Dendritic cell treated with granulocyte-macrophage colony-stimulating factor and Interleukin-4, amounts not matched to agents 40 ng/mL and 50 ng/mL, for 4 days (primary cell): ENCODE measurements at regions of chr18 and their contacts with region 1.

Region 1: GRCh38 chr18:27461957-27462356 is 276.8 kb upstream of the CHST9 start:
- H3K4me3 Mint-ChIP-seq: no peak overlapping the region
- H3K27ac Mint-ChIP-seq: no peak overlapping the region
- H3K4me1 Mint-ChIP-seq: no peaks in the 10 kb centered on the region
- H3K27me3 Mint-ChIP-seq: no peaks in the 10 kb centered on the region

Region 2: DNA sequence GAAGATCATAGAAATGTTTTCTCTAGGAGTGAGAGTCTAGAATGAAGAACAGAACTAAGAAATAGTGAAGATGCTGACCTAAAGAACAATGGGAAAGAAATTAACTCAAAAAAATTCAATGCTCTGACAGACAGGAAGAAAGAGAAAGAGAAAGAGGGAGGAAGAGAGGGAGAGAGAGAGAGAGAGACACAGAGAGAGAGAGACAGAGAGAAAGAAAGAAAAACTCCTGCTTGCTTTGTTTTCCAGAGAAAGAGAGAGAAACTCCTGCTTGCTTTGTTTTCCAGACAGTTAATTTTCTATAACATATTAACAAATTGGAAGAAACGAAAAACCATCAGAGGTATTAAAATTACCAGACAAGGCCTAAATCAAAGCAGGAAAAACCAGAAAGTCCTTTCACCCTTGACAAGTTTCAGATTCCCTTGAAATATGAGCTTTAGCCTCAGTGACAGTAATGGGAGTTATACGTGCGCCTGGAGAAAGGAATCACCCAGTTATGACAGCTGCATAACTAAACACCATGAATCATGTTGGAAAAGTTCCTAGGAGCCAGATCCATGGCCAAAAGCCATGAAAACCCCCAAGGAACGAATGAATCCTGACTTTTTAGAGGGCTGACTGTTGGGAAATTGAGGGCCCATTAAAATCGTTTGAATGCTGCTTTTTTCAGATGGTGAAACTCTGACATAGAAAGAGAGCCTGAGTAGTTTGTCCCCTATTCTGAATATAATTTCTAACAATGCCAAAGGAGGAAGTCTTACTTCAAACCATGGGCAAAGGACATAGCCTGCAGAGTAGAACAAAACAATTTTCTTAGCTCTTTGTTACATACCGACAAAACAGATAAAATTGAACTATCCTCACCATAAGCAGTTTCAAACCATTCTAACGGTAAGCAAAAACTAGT is 48.2 kb before region 1 on chr18:
- intact Hi-C with region 1: loop called (anchors 5 kb)
- H3K4me3 Mint-ChIP-seq: no peak overlapping the region
- H3K27ac Mint-ChIP-seq: no peak overlapping the region
- H3K4me1 Mint-ChIP-seq: no peaks in the 10 kb centered on the region
- H3K27me3 Mint-ChIP-seq: no peaks in the 10 kb centered on the region